ENCODE measurements at regions of chr1 and their contacts with region 1.

Region 1: GRCh38 chr1:173202430-173203145 is 4.5 kb downstream of the TNFSF4 start:
- DNase-seq: peak; percentile 95
- ATAC-seq: peak; percentile 68
- H3K4me3 ChIP-seq: no peak overlapping the region
- H3K27ac ChIP-seq: peak overlapping the region; percentile 36; the same call in 1 of the 2 replicates
- H3K4me1 ChIP-seq: peaks cover 14% of the 10 kb centered on the region
- H3K27me3 ChIP-seq: no peaks in the 10 kb centered on the region
- CTCF ChIP-seq: peak; percentile 87
- POLR2A ChIP-seq: no peak; the same call in 1 of the 2 replicates
- RAD21 ChIP-seq: peak; percentile 94

Region 2: DNA sequence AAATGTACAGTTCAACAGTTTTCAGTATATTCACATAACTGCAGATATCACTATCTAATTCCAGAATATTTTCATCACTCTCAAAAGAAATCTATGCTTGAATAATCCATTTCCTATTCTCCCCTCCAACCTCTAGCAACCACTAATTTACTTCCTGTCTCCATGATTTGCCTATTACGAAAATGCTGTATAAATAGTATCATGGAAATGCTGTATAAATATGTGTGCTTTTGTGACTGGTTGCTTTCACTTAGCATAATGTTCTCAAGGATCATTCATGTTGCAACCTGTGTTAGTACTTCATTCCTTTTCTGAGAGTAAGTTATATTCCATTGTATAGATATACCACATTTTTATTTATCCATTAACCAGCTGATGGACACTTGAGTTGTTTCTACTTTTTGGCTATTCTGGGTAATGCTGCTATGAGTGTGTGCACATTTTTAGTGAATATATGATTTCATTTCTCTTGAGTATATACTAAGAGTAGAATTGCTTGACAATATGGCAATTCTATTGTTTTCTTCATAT is 267.5 kb before region 1 on chr1:
- CTCF ChIA-PET with region 1: interaction called, 3 read pairs
- POLR2A ChIA-PET with region 1: no interaction called
- dilution Hi-C with region 1: no loop called
- in situ Hi-C with region 1: no loop called
- intact Hi-C with region 1: loop called (anchors 5 kb)
- DNase-seq: peak; percentile 56
- ATAC-seq: no peak
- H3K4me3 ChIP-seq: no peak overlapping the region
- H3K27ac ChIP-seq: peak overlapping the region; percentile 32; the same call in 1 of the 2 replicates
- H3K4me1 ChIP-seq: peaks cover 25% of the 10 kb centered on the region
- H3K27me3 ChIP-seq: no peaks in the 10 kb centered on the region
- CTCF ChIP-seq: no peak
- POLR2A ChIP-seq: no peak
- RAD21 ChIP-seq: no peak

Region 3: GRCh38 chr1:172951730-172952365 is 250.7 kb before region 1 on chr1:
- CTCF ChIA-PET with region 1: interaction called, 3 read pairs
- POLR2A ChIA-PET with region 1: interaction called, 3 read pairs
- dilution Hi-C with region 1: no loop called
- in situ Hi-C with region 1: no loop called
- intact Hi-C with region 1: loop called (anchors 5 kb)
- DNase-seq: peak; percentile 91
- ATAC-seq: peak; percentile 19
- H3K4me3 ChIP-seq: no peak overlapping the region
- H3K27ac ChIP-seq: peak overlapping the region; percentile 81; the same call in 1 of the 2 replicates
- H3K4me1 ChIP-seq: peaks cover 32% of the 10 kb centered on the region
- H3K27me3 ChIP-seq: no peaks in the 10 kb centered on the region
- CTCF ChIP-seq: no peak
- POLR2A ChIP-seq: no peak
- RAD21 ChIP-seq: no peak

Region 4: GRCh38 chr1:173122958-173123852 is 79.4 kb before region 1 on chr1:
- CTCF ChIA-PET with region 1: no interaction called
- POLR2A ChIA-PET with region 1: interaction called, 4 read pairs
- dilution Hi-C with region 1: no loop called
- in situ Hi-C with region 1: no loop called
- intact Hi-C with region 1: loop called (anchors 5 kb)
- DNase-seq: peak; percentile 95
- ATAC-seq: peak; percentile 85
- H3K4me3 ChIP-seq: peak overlapping the region; percentile 27
- H3K27ac ChIP-seq: peak overlapping the region; percentile 87
- H3K4me1 ChIP-seq: peaks cover 8% of the 10 kb centered on the region
- H3K27me3 ChIP-seq: no peaks in the 10 kb centered on the region
- CTCF ChIP-seq: no peak
- POLR2A ChIP-seq: no peak
- RAD21 ChIP-seq: peak; percentile 9; the same call in 1 of the 2 replicates

Region 5: GRCh38 chr1:173176246-173176645 is 26.3 kb before region 1 on chr1:
- CTCF ChIA-PET with region 1: no interaction called
- POLR2A ChIA-PET with region 1: no interaction called
- dilution Hi-C with region 1: no loop called
- in situ Hi-C with region 1: no loop called
- intact Hi-C with region 1: no loop called
- DNase-seq: no peak
- ATAC-seq: no peak
- H3K4me3 ChIP-seq: no peak overlapping the region
- H3K27ac ChIP-seq: no peak overlapping the region
- H3K4me1 ChIP-seq: peaks cover 5% of the 10 kb centered on the region; the same call in 1 of the 2 replicates
- H3K27me3 ChIP-seq: no peaks in the 10 kb centered on the region
- CTCF ChIP-seq: no peak
- POLR2A ChIP-seq: no peak
- RAD21 ChIP-seq: no peak

Region 6: GRCh38 chr1:173213665-173214064 is 11.1 kb after region 1 on chr1:
- CTCF ChIA-PET with region 1: no interaction called
- POLR2A ChIA-PET with region 1: no interaction called
- dilution Hi-C with region 1: no loop called
- in situ Hi-C with region 1: no loop called
- intact Hi-C with region 1: no loop called
- DNase-seq: no peak
- ATAC-seq: no peak
- H3K4me3 ChIP-seq: no peak overlapping the region
- H3K27ac ChIP-seq: no peak overlapping the region
- H3K4me1 ChIP-seq: no peaks in the 10 kb centered on the region
- H3K27me3 ChIP-seq: no peaks in the 10 kb centered on the region
- CTCF ChIP-seq: no peak
- POLR2A ChIP-seq: no peak
- RAD21 ChIP-seq: no peak

Region 7: GRCh38 chr1:173409613-173410012 is 207.0 kb after region 1 on chr1:
- CTCF ChIA-PET with region 1: interaction called, 3 read pairs
- POLR2A ChIA-PET with region 1: no interaction called
- dilution Hi-C with region 1: no loop called
- in situ Hi-C with region 1: no loop called
- intact Hi-C with region 1: loop called (anchors 2 kb)
- DNase-seq: peak; percentile 76
- ATAC-seq: 0 out of 2 replicates have a peak, but pooled peaks have one; percentile 15
- H3K4me3 ChIP-seq: no peak overlapping the region
- H3K27ac ChIP-seq: no peak overlapping the region
- H3K4me1 ChIP-seq: peaks cover 10% of the 10 kb centered on the region
- H3K27me3 ChIP-seq: no peaks in the 10 kb centered on the region
- CTCF ChIP-seq: no peak
- POLR2A ChIP-seq: no peak
- RAD21 ChIP-seq: no peak

Region 8: GRCh38 chr1:173824331-173825081 is 621.9 kb after region 1 on chr1 and contains the starts of genes CENPL and DARS2:
- CTCF ChIA-PET with region 1: no interaction called
- POLR2A ChIA-PET with region 1: no interaction called
- dilution Hi-C with region 1: no loop called
- in situ Hi-C with region 1: no loop called
- intact Hi-C with region 1: loop called (anchors 5 kb)
- DNase-seq: peak; percentile 98
- ATAC-seq: peak; percentile 97
- H3K4me3 ChIP-seq: peak within 1 kb of the TSS; percentile 65
- H3K27ac ChIP-seq: peak within 1 kb of the TSS; percentile 84
- H3K4me1 ChIP-seq: peaks cover 2% of the 10 kb centered on the region; the same call in 1 of the 2 replicates
- H3K27me3 ChIP-seq: no peaks in the 10 kb centered on the region
- CTCF ChIP-seq: no peak
- POLR2A ChIP-seq: peak; percentile 86; the same call in 1 of the 2 replicates
- RAD21 ChIP-seq: no peak
- total RNA-seq, gene CENPL: 21.1 and 21.9 TPM in 2 replicates
- total RNA-seq, gene DARS2: 18.8 and 22.8 TPM in 2 replicates

Region 9: DNA sequence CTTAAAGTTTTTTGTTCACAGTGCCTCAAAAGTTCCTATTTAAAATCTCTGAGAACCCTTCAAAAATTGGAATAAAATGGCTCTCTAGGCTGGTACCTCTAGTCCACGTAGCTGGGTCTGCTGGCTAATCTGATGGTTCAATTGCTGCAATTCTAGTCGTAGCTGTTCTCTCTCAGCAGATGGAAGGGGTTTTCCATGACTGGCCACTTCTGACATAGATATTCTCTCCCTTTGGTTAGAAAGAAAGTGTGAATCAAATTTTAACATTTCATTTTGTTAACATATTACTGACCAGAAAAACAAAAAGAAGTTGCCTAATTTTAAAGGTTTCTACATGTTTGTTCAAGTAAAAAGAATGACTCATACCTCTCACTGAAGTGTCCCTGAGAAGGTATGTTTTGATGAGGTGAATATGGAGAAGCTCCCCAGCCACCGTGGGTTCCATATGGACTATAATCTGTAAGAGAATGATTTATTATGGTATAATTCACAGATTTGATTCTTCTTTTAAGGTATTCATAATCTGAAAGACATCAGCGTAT is 743.9 kb after region 1 on chr1:
- CTCF ChIA-PET with region 1: no interaction called
- POLR2A ChIA-PET with region 1: no interaction called
- dilution Hi-C with region 1: no loop called
- in situ Hi-C with region 1: no loop called
- intact Hi-C with region 1: no loop called
- DNase-seq: no peak
- ATAC-seq: no peak
- H3K4me3 ChIP-seq: no peak overlapping the region
- H3K27ac ChIP-seq: no peak overlapping the region
- H3K4me1 ChIP-seq: no peaks in the 10 kb centered on the region
- H3K27me3 ChIP-seq: no peaks in the 10 kb centered on the region
- CTCF ChIP-seq: no peak
- POLR2A ChIP-seq: no peak
- RAD21 ChIP-seq: no peak